ENCODE measurements at regions of chr21 and their contacts with region 1.

Region 1: GRCh38 chr21:30340441-30341241 is 3.1 kb upstream of the KRTAP27-1 start:
- DNase-seq: peak; percentile 8
- ATAC-seq: no peak
- H3K4me3 ChIP-seq: no peak overlapping the region
- H3K4me3 Mint-ChIP-seq: no peak overlapping the region
- H3K27ac ChIP-seq: no peak overlapping the region
- H3K27ac Mint-ChIP-seq: no peak overlapping the region
- H3K4me1 ChIP-seq: no peaks in the 10 kb centered on the region
- H3K4me1 Mint-ChIP-seq: no peaks in the 10 kb centered on the region
- H3K27me3 ChIP-seq: no peaks in the 10 kb centered on the region
- H3K27me3 Mint-ChIP-seq: no peaks in the 10 kb centered on the region
- CTCF ChIP-seq: peak; percentile 71

Region 2: GRCh38 chr21:30391492-30392025 is 50.9 kb after region 1 on chr21:
- CTCF ChIA-PET with region 1: no interaction called
- POLR2A ChIA-PET with region 1: no interaction called
- intact Hi-C with region 1: no loop called
- DNase-seq: no peak
- ATAC-seq: no peak
- H3K4me3 ChIP-seq: no peak overlapping the region
- H3K4me3 Mint-ChIP-seq: no peak overlapping the region
- H3K27ac ChIP-seq: no peak overlapping the region
- H3K27ac Mint-ChIP-seq: no peak overlapping the region
- H3K4me1 ChIP-seq: no peaks in the 10 kb centered on the region
- H3K4me1 Mint-ChIP-seq: no peaks in the 10 kb centered on the region
- H3K27me3 ChIP-seq: no peaks in the 10 kb centered on the region
- H3K27me3 Mint-ChIP-seq: no peaks in the 10 kb centered on the region
- CTCF ChIP-seq: no peak

Region 3: DNA sequence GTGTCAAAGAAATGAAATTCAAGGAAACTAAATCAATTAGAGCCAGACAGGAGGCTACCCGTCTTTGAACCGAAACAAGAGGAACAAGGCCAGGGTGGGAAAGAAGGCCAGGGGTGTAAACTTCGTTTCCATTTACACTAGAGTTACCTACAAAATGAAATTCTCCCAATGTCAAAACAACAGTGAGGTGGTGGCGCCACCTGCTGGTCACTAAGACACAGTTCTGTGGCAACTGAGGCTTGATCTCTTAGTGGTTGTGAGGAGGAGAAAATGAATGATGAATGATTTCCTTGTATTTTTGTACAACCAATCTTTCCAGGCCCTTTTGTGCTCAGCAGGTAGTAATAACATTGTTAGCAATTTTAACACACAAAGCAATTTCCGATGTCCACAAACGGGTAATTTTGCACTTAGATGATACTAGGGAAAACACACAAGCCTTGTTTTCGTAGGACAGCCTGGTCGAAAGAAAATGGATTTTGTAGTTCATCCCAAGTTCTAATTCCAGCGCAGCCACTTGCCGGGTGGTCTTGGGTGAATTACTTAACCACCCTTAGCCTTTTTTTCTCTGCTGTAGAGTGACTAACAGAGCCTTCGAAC is 1264.0 kb after region 1 on chr21:
- CTCF ChIA-PET with region 1: no interaction called
- POLR2A ChIA-PET with region 1: no interaction called
- intact Hi-C with region 1: loop called (anchors 5 kb)
- DNase-seq: peak; percentile 73
- ATAC-seq: peak; percentile 61
- H3K4me3 ChIP-seq: no peak overlapping the region
- H3K4me3 Mint-ChIP-seq: no peak overlapping the region
- H3K27ac ChIP-seq: no peak overlapping the region
- H3K27ac Mint-ChIP-seq: no peak overlapping the region
- H3K4me1 ChIP-seq: peaks cover 3% of the 10 kb centered on the region in 2 donors
- H3K4me1 Mint-ChIP-seq: peaks cover 2% of the 10 kb centered on the region
- H3K27me3 ChIP-seq: peaks cover 0 to 6% (median 0%) of the 10 kb centered on the region in 4 experiments
- H3K27me3 Mint-ChIP-seq: peaks cover 11% of the 10 kb centered on the region
- CTCF ChIP-seq: peak; percentile 92